ENCODE measurements at regions of chr1 and their contacts with region 1.

Region 1: DNA sequence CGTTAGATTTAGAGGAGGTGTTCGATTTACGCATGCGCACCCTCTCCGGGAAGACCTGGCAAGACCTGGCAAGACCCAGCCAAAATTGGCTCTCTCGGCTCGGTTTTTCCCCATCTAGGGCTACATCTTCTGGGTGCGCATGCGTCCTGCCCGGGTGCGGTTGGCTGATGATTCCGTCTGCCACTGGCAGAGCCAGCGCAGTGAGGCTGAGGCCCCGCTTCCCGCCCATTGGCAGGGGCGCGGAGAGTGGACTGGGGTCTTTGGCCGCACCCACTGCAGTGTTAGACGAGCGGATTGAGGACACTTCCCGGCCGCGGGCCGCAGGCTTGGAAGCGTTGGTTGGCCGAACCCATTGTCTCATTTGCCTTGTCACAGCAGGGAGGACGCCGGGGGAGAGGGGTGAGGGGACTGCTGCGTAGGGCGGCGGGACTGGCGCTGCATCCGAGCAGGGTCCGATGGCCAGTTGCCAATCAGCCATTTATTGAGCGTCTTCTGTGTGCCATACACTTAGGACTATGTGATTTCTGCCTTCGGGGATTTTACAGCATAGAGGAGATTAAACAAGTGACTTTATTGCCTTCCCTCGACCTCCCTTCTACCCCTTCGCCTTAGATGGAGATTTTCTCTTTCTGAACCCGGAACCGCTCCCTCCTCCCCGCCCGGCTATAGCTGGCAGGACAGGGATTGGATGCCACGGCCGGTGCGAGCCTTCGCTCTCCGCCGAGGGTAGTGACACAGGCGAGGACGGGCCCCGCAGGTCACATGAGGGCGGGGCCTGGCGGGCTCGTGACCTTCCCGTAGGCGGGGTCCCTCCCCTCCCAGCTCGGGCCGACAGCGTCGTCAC is 43.7 kb downstream of the MEF2D start:
- DNase-seq: peak; percentile 99
- ATAC-seq: peak; percentile 88
- H3K4me3 Mint-ChIP-seq: peak overlapping the region; percentile 79
- H3K27ac Mint-ChIP-seq: peak overlapping the region; percentile 98
- H3K4me1 Mint-ChIP-seq: peaks cover 22% of the 10 kb centered on the region
- H3K27me3 Mint-ChIP-seq: no peaks in the 10 kb centered on the region

Region 2: GRCh38 chr1:155562581-155563376 is 894.1 kb before region 1 on chr1 and contains the start of gene ASH1L:
- CTCF ChIA-PET with region 1: no interaction called
- POLR2A ChIA-PET with region 1: no interaction called
- intact Hi-C with region 1: loop called in 1 of 2 experiments (anchors 5 kb)
- DNase-seq: peak; percentile 96
- ATAC-seq: peak; percentile 83
- H3K4me3 Mint-ChIP-seq: peak within 1 kb of the TSS; percentile 90
- H3K27ac Mint-ChIP-seq: peak within 1 kb of the TSS; percentile 99
- H3K4me1 Mint-ChIP-seq: peaks cover 46% of the 10 kb centered on the region
- H3K27me3 Mint-ChIP-seq: no peaks in the 10 kb centered on the region
- total RNA-seq, gene ASH1L: 28.1 to 31.4 TPM

Region 3: DNA sequence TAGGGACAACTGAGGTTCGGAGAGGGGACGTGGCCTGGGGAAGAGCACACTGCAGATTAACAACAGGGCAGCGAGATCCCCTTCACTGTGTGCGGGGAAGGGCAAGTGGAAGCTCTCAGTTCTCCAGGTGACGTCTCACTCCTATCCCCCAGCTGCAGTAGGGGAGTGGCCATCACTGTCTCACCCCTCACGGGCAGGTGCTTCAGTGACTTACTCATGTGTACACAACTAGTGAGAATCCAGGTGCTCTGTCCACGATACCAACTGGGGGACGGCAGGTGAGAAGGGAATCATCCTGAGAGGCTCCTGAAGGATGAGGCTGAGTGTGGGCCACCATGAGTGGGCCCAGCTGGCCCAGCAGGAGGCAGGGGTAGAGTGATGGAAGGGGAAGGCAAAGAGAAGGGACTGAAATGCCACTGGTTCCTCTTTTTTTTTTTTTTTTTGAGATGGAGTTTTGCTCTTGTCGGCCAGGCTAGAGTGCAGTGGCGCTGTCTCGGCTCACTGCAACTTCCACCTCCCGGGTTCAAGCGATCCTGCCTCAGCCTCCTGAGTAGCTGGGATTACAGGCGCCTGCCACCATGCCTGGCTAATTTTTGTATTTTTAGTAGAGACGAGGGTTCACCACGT is 61.9 kb before region 1 on chr1:
- CTCF ChIA-PET with region 1: no interaction called
- POLR2A ChIA-PET with region 1: no interaction called
- intact Hi-C with region 1: no loop called
- DNase-seq: no peak
- ATAC-seq: no peak
- H3K4me3 Mint-ChIP-seq: no peak overlapping the region
- H3K27ac Mint-ChIP-seq: no peak overlapping the region
- H3K4me1 Mint-ChIP-seq: peaks cover 3% of the 10 kb centered on the region
- H3K27me3 Mint-ChIP-seq: peaks cover 13% of the 10 kb centered on the region

Region 4: GRCh38 chr1:156445789-156446263 is 11.0 kb before region 1 on chr1:
- CTCF ChIA-PET with region 1: interaction called, 23 read pairs
- POLR2A ChIA-PET with region 1: no interaction called
- intact Hi-C with region 1: no loop called
- DNase-seq: peak; percentile 90
- ATAC-seq: peak; percentile 89
- H3K4me3 Mint-ChIP-seq: no peak overlapping the region
- H3K27ac Mint-ChIP-seq: no peak overlapping the region
- H3K4me1 Mint-ChIP-seq: peaks cover 16% of the 10 kb centered on the region
- H3K27me3 Mint-ChIP-seq: peaks cover 33% of the 10 kb centered on the region

Region 5: DNA sequence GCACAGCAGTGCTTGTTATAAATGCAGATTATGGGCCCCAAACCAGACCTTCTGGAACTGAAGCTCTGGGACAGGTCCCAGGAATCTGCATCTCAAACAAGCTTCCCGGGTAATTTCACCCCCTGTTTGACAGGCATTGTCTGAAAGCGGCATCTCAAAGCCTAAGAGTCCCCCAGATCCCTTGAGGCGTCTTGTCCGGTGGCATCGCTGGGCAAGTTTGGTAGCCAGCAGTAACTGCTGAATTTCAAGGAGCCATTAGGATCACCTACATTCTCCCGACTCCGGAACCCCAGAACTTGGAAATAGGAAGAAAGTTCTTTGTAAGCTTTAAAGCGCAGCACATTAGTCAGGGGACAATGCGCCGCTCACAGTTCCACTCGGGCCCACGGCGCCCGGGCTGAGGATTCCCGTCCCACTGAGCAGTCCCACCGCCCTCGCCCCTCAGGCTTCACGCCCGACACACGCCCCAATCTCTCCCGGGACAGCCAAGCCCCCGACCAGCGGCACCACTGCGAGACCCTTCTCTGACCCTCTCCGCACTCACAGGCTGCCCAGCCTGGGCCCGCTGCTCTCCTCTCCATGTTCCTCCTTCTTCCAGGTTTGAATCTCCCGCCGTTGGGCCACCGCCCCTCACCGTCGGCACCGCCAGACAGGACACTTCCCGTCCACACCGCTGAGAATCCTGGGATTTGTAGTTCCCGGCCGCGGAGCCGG is 115.3 kb after region 1 on chr1 and contains the start of gene IQGAP3:
- CTCF ChIA-PET with region 1: no interaction called
- POLR2A ChIA-PET with region 1: no interaction called
- intact Hi-C with region 1: loop called in 1 of 2 experiments (anchors 1 kb)
- DNase-seq: peak; percentile 87
- ATAC-seq: peak; percentile 96
- H3K4me3 Mint-ChIP-seq: peak within 1 kb of the TSS; percentile 89
- H3K27ac Mint-ChIP-seq: peak within 1 kb of the TSS; percentile 73
- H3K4me1 Mint-ChIP-seq: peaks cover 22% of the 10 kb centered on the region
- H3K27me3 Mint-ChIP-seq: peaks cover 32% of the 10 kb centered on the region
- total RNA-seq, gene IQGAP3: 14.9 to 16.0 TPM

Region 6: GRCh38 chr1:156591432-156592157 is 134.8 kb after region 1 on chr1 and contains the start of gene NAXE:
- CTCF ChIA-PET with region 1: interaction called, 3 read pairs
- POLR2A ChIA-PET with region 1: no interaction called
- intact Hi-C with region 1: loop called in 1 of 2 experiments (anchors 2 kb)
- DNase-seq: peak; percentile 82
- ATAC-seq: peak; percentile 94
- H3K4me3 Mint-ChIP-seq: peak within 1 kb of the TSS; percentile 80
- H3K27ac Mint-ChIP-seq: peak within 1 kb of the TSS; percentile 93
- H3K4me1 Mint-ChIP-seq: peaks cover 24% of the 10 kb centered on the region
- H3K27me3 Mint-ChIP-seq: no peaks in the 10 kb centered on the region
- total RNA-seq, gene NAXE: 79.9 to 82.0 TPM

Region 7: DNA sequence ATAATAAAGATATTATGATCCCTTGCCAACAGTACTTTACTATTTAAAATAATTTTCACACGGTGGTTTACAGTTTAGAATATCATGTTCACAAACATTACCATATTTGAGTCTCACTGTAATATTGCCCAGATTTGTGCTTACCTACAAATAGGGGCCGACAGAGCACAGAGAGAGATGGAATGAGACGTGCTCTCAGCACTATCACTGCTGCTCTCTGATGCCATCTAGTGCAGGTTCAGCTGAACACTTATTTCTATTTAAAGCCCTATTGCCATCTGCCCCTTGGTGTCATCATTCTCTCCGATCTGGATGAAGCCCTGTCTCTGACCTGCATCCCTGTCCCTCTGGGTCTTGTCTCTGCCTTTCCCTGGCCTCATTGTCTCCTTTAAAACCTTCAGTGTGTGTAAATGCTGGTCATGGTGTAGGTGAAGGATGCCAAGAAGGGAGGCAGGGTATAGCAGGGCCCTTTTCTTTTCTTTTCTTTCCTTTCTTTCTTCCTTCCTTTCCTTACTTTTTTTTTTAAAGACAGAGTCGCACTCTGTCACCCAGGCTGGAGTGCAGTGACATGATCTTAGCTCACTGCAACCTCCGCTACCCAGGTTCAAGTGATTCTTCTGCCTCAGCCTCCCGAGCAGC is 151.3 kb after region 1 on chr1:
- CTCF ChIA-PET with region 1: interaction called, 6 read pairs
- POLR2A ChIA-PET with region 1: no interaction called
- intact Hi-C with region 1: loop called (anchors 1 to 2 kb)
- DNase-seq: peak; percentile 78
- ATAC-seq: peak; percentile 98
- H3K4me3 Mint-ChIP-seq: no peak overlapping the region
- H3K27ac Mint-ChIP-seq: no peak overlapping the region
- H3K4me1 Mint-ChIP-seq: peaks cover 8% of the 10 kb centered on the region
- H3K27me3 Mint-ChIP-seq: peaks cover 9% of the 10 kb centered on the region

Measured in activated CD4-positive, alpha-beta T cell treated with anti-CD3 and anti-CD28 coated beads for 36 hours (primary cell).